Vagina (tissue), 2 donors: ENCODE measurements at regions of chr2 and their contacts with region 1.

Region 1: DNA sequence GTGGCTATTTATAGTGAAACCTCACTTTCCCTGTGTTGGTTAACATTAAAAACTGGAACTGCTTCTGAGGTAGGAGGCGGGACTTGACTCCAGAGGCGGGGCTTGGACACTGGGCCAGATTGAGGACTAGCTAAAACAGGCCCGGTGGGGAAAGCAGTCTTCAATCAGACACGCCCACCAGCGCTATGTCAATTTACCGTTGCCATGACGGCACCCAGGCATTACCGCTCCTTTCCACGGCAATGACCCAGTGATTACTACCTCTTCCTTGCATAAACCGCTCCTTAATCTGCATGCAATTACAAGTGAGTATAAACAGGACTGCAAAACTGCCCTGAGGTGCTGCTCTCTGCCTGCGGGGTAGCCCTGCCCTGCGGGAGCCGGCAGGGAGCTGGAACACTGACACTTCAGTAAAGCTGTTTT is 35.3 kb downstream of the LRRFIP1 start:
- DNase-seq: peak in 1 of 2 donors; percentile 98
- H3K4me3 ChIP-seq: no peak overlapping the region
- H3K27ac ChIP-seq: peak overlapping the region; percentile 54
- H3K4me1 ChIP-seq: peaks cover 17% of the 10 kb centered on the region
- H3K27me3 ChIP-seq: no peaks in the 10 kb centered on the region
- CTCF ChIP-seq: no peak
- POLR2A ChIP-seq: no peak

Region 2: GRCh38 chr2:237627441-237628246 is 35.0 kb before region 1 on chr2 and contains the start of gene LRRFIP1:
- intact Hi-C with region 1: loop called (anchors 5 kb)
- DNase-seq: no peak
- H3K4me3 ChIP-seq: peak within 1 kb of the TSS; percentile 58 to 93
- H3K27ac ChIP-seq: peak within 1 kb of the TSS; percentile 87
- H3K4me1 ChIP-seq: peaks cover 13% of the 10 kb centered on the region
- H3K27me3 ChIP-seq: no peaks in the 10 kb centered on the region
- CTCF ChIP-seq: no peak
- POLR2A ChIP-seq: peak in 1 of 2 donors; percentile 53
- total RNA-seq, gene LRRFIP1: 132 TPM

Region 3: DNA sequence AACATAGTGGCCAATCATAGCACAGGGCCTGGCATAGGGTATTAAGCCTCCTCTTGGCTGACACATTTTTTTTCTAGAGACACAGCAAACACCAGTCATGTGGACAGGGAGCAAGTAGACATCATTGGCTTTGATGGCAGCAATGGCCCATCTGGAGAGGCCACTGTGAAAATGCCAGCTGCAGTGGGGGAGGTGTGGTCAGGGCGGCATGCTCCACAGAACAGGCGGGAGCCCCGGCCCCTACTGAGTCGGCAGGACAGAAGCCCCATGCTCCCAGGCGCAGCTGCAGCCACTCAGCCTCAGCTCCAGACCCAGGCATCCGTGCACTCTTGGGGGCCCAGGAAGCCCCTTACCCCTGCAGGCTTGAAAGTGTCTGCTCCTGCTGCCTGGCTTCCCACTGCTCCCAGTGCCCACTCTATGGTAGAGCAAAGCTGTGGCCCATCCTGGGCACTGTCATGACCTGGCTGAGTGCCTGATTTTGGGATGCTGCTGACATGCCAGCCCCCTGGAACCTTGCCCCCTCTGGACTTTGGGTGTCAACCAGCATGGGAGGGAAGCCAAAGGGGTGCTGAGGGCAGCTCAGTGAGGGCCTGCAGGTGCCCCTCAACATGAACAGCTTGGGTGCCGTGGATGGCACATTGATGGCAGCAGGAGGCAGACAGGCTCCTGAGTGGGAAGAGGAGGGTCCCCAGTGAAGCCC is 280.9 kb after region 1 on chr2:
- intact Hi-C with region 1: no loop called
- DNase-seq: no peak
- H3K4me3 ChIP-seq: no peak overlapping the region
- H3K27ac ChIP-seq: no peak overlapping the region
- H3K4me1 ChIP-seq: no peaks in the 10 kb centered on the region
- H3K27me3 ChIP-seq: no peaks in the 10 kb centered on the region
- CTCF ChIP-seq: no peak
- POLR2A ChIP-seq: no peak